HCT116 (cell line): ENCODE measurements at regions of chr7 and their contacts with region 1.

Region 1: GRCh38 chr7:108146070-108146837 is 16.1 kb upstream of the LAMB4 start:
- DNase-seq: peak; percentile 69
- ATAC-seq: peak; percentile 91
- H3K4me3 ChIP-seq: peak overlapping the region in 1 of 2 experiments; percentile 24; a peak in 2 of 4 replicates
- H3K27ac ChIP-seq: no peak overlapping the region
- H3K4me1 ChIP-seq: peaks cover 0 to 3% of the 10 kb centered on the region in 2 experiments; a peak in 1 of 4 replicates
- H3K27me3 ChIP-seq: no peaks in the 10 kb centered on the region
- CTCF ChIP-seq: peak; percentile 84 to 85 (median 85)
- POLR2A ChIP-seq: no peak
- RAD21 ChIP-seq: peak; percentile 95

Region 2: DNA sequence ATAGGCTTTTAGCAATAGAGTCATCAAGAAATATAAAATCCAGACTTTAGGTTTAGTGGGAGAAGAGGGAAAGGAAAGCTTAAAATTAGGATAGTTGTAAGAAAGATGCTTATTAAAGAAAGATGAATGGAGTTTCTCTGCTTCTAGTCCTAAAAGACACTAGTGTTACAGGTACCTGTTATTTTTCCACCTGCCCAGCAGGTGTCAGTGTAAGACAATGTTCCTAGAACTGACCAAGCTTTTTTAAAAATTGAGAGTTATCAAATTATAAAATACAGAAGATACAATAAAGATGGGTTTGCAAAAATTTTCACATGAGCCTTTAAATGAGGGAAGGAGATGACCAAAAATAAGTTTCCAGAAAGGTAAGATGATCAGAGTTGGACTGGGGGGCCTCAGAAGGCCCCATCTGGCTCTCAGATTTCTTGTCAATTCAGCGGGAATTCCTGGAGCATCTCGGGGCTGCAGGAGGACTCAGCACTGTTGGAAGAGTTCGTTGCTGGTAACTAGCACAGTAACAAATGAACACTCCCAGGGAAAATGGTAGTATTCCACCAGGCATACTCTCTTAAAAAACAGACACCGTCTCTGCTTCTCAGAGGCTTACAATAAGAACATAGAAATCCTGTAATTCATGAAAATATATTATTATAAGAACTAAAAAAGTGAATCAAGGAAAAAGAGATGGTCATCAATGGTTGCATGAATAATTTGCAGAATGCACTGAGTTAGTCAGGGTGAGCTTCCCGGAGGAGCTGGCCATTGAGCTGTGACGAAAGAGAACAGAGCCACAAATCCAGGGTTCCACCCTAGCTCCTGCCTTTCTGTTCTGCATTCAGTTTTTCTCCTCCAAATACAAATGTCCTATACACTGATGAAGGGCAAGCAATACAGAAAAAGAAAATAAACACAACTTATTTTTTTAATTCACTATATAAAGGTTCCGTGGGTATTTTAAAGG is 1353.0 kb before region 1 on chr7:
- CTCF ChIA-PET with region 1: no interaction called
- POLR2A ChIA-PET with region 1: no interaction called
- RAD21 ChIA-PET with region 1: no interaction called
- intact Hi-C with region 1: loop called (anchors 2 kb)
- DNase-seq: peak; percentile 38
- ATAC-seq: peak; percentile 69
- H3K4me3 ChIP-seq: no peak overlapping the region
- H3K27ac ChIP-seq: no peak overlapping the region
- H3K4me1 ChIP-seq: no peaks in the 10 kb centered on the region
- H3K27me3 ChIP-seq: no peaks in the 10 kb centered on the region
- CTCF ChIP-seq: peak; percentile 57 to 78 (median 70); a peak in 5 of 6 replicates
- POLR2A ChIP-seq: no peak
- RAD21 ChIP-seq: peak; percentile 89

Region 3: DNA sequence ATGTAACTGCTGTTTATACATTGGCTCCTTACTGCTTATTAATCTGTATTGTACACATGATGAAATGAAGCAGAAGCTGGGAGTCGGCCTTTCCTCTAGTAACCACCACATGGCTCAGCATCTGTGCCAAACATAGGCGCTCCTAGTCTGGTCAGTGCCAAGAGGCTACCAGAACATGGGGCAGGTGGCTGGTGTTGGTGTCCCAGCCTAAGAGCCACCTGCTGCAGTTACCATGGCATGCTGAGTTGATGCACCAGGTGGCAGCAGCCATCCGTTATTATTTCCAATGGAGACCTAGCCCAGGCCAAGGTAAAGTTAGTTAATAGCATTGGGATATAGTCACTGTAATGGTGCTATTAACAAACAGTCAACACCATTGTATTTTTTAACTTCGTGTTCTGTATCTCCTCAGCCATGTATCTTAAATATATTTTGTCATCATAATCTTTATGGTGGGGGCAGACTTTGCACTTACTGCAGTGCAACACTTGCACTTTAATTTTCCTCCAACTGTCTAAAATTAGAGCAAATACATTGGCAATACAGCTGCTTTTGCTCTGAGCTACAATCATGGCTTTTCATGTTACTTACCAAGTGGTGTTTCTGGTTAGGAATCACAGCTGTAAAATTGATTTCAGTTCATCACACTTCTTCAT is 944.3 kb before region 1 on chr7:
- CTCF ChIA-PET with region 1: no interaction called
- POLR2A ChIA-PET with region 1: no interaction called
- RAD21 ChIA-PET with region 1: no interaction called
- intact Hi-C with region 1: loop called (anchors 1 kb)
- DNase-seq: peak; percentile 23
- ATAC-seq: peak; percentile 98
- H3K4me3 ChIP-seq: no peak overlapping the region
- H3K27ac ChIP-seq: no peak overlapping the region
- H3K4me1 ChIP-seq: no peaks in the 10 kb centered on the region
- H3K27me3 ChIP-seq: no peaks in the 10 kb centered on the region
- CTCF ChIP-seq: peak; percentile 41 to 72 (median 69); a peak in 5 of 6 replicates
- POLR2A ChIP-seq: no peak
- RAD21 ChIP-seq: peak; percentile 70

Region 4: GRCh38 chr7:107274506-107274905 is 871.7 kb before region 1 on chr7:
- CTCF ChIA-PET with region 1: no interaction called
- POLR2A ChIA-PET with region 1: no interaction called
- RAD21 ChIA-PET with region 1: no interaction called
- intact Hi-C with region 1: no loop called
- DNase-seq: no peak
- ATAC-seq: no peak
- H3K4me3 ChIP-seq: no peak overlapping the region
- H3K27ac ChIP-seq: no peak overlapping the region
- H3K4me1 ChIP-seq: no peaks in the 10 kb centered on the region
- H3K27me3 ChIP-seq: no peaks in the 10 kb centered on the region
- CTCF ChIP-seq: no peak
- POLR2A ChIP-seq: no peak
- RAD21 ChIP-seq: no peak

Region 5: GRCh38 chr7:107743567-107744344 is 402.5 kb before region 1 on chr7 and contains the start of gene CBLL1:
- CTCF ChIA-PET with region 1: interaction called, 4 read pairs
- POLR2A ChIA-PET with region 1: no interaction called
- RAD21 ChIA-PET with region 1: no interaction called
- intact Hi-C with region 1: loop called (anchors 1 kb)
- DNase-seq: peak; percentile 87
- ATAC-seq: peak; percentile 95
- H3K4me3 ChIP-seq: peak within 1 kb of the TSS; percentile 86 to 89
- H3K27ac ChIP-seq: peak within 1 kb of the TSS; percentile 86
- H3K4me1 ChIP-seq: peaks cover 15 to 22% of the 10 kb centered on the region in 2 experiments
- H3K27me3 ChIP-seq: no peaks in the 10 kb centered on the region
- CTCF ChIP-seq: peak; percentile 62 to 75 (median 64)
- POLR2A ChIP-seq: peak; percentile 27
- RAD21 ChIP-seq: peak; percentile 63
- total RNA-seq, gene CBLL1: 35.0 TPM

Region 6: DNA sequence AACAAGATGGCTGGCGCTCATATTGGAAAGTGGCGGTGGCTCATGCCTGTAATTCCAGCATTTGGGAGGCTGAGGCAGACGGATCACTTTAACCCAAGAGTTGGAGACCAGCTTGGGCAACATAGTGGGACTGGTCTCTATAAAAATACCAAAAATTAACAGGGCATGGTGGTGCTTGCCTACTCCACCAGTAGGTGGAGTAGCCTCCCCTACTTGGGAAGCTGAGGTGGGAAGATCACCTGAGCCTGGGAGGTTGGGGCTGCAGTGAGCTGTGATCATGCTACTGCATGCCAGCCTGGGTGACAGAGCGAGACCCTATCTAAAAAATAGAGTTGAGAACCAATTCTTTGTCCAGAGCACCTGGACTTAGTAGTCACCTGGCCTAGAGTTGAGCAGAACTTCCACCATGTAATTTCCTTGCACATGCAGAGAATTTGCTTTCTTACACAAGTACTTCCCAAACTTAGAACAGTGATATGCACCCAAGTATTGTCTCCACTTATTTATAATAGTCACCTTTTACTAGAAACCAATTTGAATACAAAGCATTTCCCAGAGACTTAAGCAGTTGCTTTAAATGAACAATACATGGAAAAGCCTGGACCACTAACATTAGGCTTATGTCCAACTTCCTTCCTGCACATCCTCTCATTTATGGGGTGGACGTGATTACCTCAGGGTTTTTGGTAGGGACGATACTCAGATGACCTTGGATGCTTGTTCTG is 32.0 kb before region 1 on chr7:
- CTCF ChIA-PET with region 1: interaction called, 17 read pairs
- POLR2A ChIA-PET with region 1: interaction called, 3 read pairs
- RAD21 ChIA-PET with region 1: interaction called in 1 of 2 experiments, 6 read pairs
- intact Hi-C with region 1: loop called (anchors 1 kb)
- DNase-seq: peak; percentile 39
- ATAC-seq: peak; percentile 91
- H3K4me3 ChIP-seq: no peak overlapping the region
- H3K27ac ChIP-seq: no peak overlapping the region
- H3K4me1 ChIP-seq: no peaks in the 10 kb centered on the region
- H3K27me3 ChIP-seq: no peaks in the 10 kb centered on the region
- CTCF ChIP-seq: peak; percentile 53 to 74 (median 71); a peak in 5 of 6 replicates
- POLR2A ChIP-seq: no peak
- RAD21 ChIP-seq: peak; percentile 71

Region 7: DNA sequence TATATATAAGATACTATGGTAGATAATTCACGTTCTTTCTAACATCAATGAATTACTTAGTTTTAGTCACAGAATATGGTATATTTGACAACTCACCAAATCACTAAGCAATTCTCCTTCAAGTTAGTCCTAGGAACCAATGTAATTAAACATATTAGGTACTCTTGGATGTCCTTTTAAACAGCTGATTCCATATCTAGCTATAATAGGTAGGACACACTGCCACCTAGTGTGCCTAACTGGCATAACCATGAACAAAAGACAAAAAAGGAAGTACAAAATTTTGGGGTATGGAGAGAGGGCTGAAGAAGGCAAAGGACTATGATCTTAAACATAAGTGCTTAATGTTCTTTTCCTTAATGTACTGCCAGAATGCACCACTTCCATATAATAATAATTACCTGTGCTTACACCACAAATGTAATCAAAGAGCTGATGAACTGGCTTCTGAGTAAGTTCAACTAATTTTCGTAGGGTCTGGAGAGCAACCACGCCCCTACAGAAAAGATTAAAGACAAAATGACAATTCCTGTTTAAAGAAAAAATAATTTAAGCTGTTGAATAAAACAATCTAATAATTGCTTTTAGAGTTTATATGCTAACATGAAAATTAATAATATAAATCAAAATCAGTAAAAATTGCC is 350.9 kb after region 1 on chr7:
- CTCF ChIA-PET with region 1: interaction called, 14 read pairs
- POLR2A ChIA-PET with region 1: no interaction called
- RAD21 ChIA-PET with region 1: no interaction called
- intact Hi-C with region 1: no loop called
- DNase-seq: peak; percentile 40
- ATAC-seq: peak; percentile 63
- H3K4me3 ChIP-seq: no peak overlapping the region
- H3K27ac ChIP-seq: no peak overlapping the region
- H3K4me1 ChIP-seq: no peaks in the 10 kb centered on the region
- H3K27me3 ChIP-seq: no peaks in the 10 kb centered on the region
- CTCF ChIP-seq: peak; percentile 55 to 88 (median 66); a peak in 5 of 6 replicates
- POLR2A ChIP-seq: no peak
- RAD21 ChIP-seq: peak; percentile 76